ENCODE measurements at regions of chr19 and their contacts with region 1.

Region 1: GRCh38 chr19:9435279-9436268 is at the start of gene ZNF266:
- DNase-seq: peak; percentile 96
- ATAC-seq: peak; percentile 90
- H3K4me3 Mint-ChIP-seq: peak within 1 kb of the TSS; percentile 96
- H3K27ac Mint-ChIP-seq: peak within 1 kb of the TSS; percentile 100
- H3K4me1 Mint-ChIP-seq: peaks cover 36% of the 10 kb centered on the region
- H3K27me3 Mint-ChIP-seq: no peaks in the 10 kb centered on the region
- CTCF ChIP-seq: peak; percentile 74
- total RNA-seq, gene ZNF266: 23.5 to 26.8 TPM

Region 2: GRCh38 chr19:9205501-9206113 is 230.0 kb before region 1 on chr19:
- CTCF ChIA-PET with region 1: interaction called, 9 read pairs
- POLR2A ChIA-PET with region 1: no interaction called
- intact Hi-C with region 1: loop called (anchors 10 kb)
- DNase-seq: peak; percentile 77
- ATAC-seq: peak; percentile 82
- H3K4me3 Mint-ChIP-seq: peak overlapping the region; percentile 26
- H3K27ac Mint-ChIP-seq: no peak overlapping the region
- H3K4me1 Mint-ChIP-seq: no peaks in the 10 kb centered on the region
- H3K27me3 Mint-ChIP-seq: peaks cover 7% of the 10 kb centered on the region
- CTCF ChIP-seq: peak; percentile 96

Region 3: DNA sequence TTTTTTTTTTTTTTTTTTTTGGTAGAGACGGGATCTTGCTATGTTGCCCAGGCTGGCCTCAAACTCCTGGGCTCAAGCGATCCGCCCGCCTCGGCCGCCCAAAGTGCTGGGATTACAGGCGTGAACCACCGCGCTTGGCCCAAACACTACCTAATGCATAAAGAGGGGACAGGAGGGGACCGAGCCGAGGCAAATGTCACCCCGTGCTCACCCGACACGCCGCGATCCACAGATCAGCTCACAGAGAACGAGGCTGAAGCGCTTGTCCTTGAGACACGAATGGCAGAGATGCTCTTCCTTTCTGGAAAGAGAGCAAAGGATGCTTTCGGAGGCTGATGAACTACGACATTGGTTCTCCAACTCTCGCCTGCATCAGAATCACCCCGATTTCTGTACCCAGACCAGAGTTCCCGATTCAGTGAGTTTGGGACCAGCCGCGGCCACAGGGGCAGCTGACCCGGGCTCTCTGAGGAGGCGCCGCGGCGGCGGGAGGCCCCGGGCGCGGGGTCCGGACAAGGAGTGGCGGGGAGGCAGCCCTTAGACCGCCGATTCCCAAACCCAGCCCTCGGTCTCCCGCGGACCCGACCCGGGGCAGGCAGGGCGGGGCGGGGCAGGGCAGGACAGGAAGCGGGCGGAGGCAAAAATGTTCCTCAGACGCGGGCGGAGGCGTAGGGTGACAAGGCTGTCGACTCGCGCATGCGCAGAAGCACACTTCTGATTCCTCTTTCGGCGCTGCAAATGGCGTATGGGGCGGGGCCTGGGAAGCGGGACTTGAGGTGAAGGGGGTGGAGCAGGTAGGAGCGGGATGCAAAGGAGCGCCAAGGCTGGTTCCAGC is 126.2 kb before region 1 on chr19 and contains the start of gene ZNF699:
- CTCF ChIA-PET with region 1: interaction called, 8 read pairs
- POLR2A ChIA-PET with region 1: interaction called, 3 read pairs
- intact Hi-C with region 1: loop called (anchors 10 kb)
- DNase-seq: peak; percentile 99
- ATAC-seq: peak; percentile 94
- H3K4me3 Mint-ChIP-seq: peak within 1 kb of the TSS; percentile 78
- H3K27ac Mint-ChIP-seq: peak within 1 kb of the TSS; percentile 96
- H3K4me1 Mint-ChIP-seq: peaks cover 17% of the 10 kb centered on the region
- H3K27me3 Mint-ChIP-seq: no peaks in the 10 kb centered on the region
- CTCF ChIP-seq: no peak
- total RNA-seq, gene ZNF699: 5.2 to 6.3 TPM

Region 4: DNA sequence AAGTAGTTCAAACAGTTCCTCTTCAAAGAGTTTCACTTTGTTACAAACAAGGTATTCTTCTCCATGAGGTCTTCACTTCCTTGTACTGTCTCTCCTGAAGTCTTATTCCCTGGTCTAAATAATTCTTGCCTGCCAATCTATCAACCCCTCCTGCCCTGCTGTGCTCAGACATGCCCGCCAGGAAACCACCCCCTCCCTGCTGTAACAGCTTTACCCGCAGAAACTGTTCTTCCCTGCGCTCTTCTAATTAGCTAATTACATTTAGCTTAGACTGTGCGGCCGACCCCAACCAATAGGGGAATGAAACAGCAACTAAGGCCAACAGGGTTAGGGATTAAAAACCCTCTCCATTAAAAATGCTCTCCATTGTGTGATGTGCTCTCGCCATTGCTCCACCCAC is 286.3 kb after region 1 on chr19:
- CTCF ChIA-PET with region 1: no interaction called
- POLR2A ChIA-PET with region 1: no interaction called
- intact Hi-C with region 1: no loop called
- DNase-seq: peak; percentile 24
- ATAC-seq: peak; percentile 45
- H3K4me3 Mint-ChIP-seq: peak overlapping the region; percentile 9
- H3K27ac Mint-ChIP-seq: peak overlapping the region; percentile 54
- H3K4me1 Mint-ChIP-seq: peaks cover 7% of the 10 kb centered on the region
- H3K27me3 Mint-ChIP-seq: peaks cover 7% of the 10 kb centered on the region
- CTCF ChIP-seq: no peak

Measured in activated CD8-positive, alpha-beta T cell treated with anti-CD3 and anti-CD28 coated beads for 36 hours (primary cell).